HEK293 (cell line): ENCODE measurements at regions of chr7 and their contacts with region 1.

Region 1: GRCh38 chr7:28926871-28927597 is 31.1 kb downstream of the TRIL start:
- H3K4me3 ChIP-seq: peak overlapping the region; percentile 48
- H3K27ac ChIP-seq: peak overlapping the region; percentile 6; the same call in 1 of the 2 replicates
- H3K4me1 ChIP-seq: peaks cover under 1% of the 10 kb centered on the region; the same call in 1 of the 2 replicates
- CTCF ChIP-seq: no peak; the same call in 1 of the 2 replicates

Region 2: DNA sequence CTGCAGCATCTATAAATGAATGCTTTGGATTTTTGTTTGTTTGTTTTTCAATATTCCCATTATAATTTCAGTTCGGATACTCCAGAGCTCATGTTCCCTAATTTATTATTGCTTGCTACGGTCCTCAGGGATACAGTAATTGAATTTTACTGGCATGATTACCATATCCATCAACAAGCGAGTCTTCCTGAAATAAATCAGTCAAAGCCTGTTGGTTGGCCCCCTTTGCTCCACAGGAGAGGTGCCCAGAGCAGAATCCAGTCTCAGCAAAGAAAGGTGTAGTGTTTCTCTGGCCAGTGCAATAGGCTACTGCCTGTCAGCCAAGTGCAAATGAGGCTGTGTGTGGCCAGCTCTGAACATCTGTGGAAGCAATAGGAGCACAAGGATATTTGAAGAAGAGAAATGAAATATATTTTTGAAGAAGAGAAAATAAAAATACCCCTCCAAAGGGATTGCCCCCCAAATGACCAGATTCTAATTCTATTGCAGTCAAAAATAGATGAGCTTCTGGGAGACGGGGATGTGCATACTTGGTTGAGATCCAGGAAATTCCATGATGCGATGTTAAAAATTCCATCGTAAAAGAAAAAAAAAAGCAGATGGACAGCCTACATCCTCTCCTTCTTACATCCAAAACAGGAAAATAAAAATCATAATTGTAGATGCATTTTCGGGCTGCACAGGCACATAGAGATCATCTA is 13.0 kb after region 1 on chr7:
- CTCF ChIA-PET with region 1: interaction called, 61 read pairs
- POLR2A ChIA-PET with region 1: interaction called, 5 read pairs
- H3K4me3 ChIP-seq: no peak overlapping the region
- H3K27ac ChIP-seq: no peak overlapping the region; the same call in 1 of the 2 replicates
- H3K4me1 ChIP-seq: peaks cover 12% of the 10 kb centered on the region; the same call in 1 of the 2 replicates
- CTCF ChIP-seq: no peak

Region 3: DNA sequence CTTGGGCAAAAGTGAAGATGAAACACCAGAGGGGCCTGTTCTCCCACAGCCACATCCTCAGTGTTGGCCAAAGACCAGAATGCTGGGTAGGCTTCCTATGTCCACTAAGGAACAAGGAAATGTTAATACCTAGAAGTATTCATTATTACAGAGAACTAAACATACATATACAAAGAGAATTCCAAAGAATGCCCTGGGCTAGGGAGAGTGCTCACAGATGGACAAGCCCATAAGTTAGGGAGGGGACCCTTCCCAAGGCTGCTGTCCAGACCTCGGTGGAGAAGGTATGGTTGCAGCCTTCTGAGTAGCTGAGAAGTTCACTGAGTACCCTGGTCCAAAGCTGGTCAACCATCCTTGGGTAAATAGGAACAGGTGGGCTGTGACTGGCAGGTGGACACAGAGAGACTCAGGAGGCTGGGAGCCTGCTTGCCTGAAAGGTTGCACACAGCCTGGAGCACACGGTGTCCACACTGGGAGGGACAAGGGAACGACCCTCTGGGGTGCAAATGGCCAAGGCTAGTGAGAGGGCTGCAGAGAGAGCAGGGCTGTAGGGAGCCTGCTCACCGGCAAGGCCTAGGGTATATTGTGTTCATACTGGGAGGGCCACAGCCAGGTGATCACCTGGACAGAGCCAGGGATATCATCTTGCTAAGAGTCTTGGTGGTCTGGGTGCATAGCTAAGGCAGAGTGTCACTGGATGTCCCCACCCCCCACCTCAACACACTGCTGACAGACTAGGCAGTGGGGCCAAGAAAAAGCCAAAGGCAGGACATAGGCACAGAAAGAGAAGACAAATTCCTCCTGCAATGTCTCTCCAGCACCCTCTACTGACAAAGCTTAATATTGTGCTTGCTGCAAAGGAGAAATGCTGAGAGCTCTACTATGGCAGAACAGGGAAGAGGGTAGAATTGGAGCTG is 179.0 kb after region 1 on chr7:
- CTCF ChIA-PET with region 1: interaction called, 210 read pairs
- POLR2A ChIA-PET with region 1: interaction called, 4 read pairs
- H3K4me3 ChIP-seq: no peak overlapping the region
- H3K27ac ChIP-seq: no peak overlapping the region
- H3K4me1 ChIP-seq: no peaks in the 10 kb centered on the region
- CTCF ChIP-seq: peak; percentile 64

Region 4: DNA sequence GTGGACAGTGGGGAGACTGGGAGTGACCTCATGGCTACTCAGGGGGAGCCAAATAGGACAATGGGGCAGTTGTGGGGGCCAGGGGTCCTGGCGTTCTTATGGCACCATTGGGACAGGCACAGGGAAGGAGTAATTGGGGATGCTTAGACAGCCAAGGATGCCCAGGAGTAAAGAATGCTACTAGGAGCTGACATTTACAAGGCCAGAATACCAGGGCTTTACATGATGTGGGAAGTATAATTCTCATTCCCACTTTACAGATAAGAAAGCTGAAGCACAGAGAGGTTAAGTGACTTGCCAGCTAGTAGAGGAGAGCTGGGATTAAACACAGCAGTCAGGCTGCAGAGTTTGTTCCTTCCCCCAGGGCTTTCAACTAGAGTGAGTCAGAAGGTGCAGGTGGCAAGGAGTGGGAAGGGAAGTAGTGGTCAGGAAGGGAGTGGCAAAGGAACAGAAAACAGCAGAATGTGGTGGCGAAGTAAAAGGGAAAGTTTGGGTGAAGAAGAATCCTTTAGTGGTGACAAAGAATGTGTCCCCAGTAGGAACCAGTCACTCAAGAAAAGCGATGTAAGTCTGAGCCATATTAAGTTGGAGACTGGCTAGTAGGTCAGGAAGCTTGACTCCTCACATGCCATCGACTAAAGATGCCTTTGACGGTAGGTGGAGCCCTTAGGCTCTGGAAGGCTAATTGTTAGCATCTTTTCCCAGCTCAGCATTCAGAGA is 186.5 kb after region 1 on chr7:
- CTCF ChIA-PET with region 1: interaction called, 210 read pairs
- POLR2A ChIA-PET with region 1: no interaction called
- H3K4me3 ChIP-seq: no peak overlapping the region
- H3K27ac ChIP-seq: no peak overlapping the region
- H3K4me1 ChIP-seq: peaks cover 4% of the 10 kb centered on the region
- CTCF ChIP-seq: peak; percentile 43; the same call in 1 of the 2 replicates

Region 5: GRCh38 chr7:29194594-29195427 is 267.8 kb after region 1 on chr7 and contains the start of gene CHN2:
- CTCF ChIA-PET with region 1: interaction called, 10 read pairs
- POLR2A ChIA-PET with region 1: no interaction called
- H3K4me3 ChIP-seq: peak within 1 kb of the TSS; percentile 83
- H3K27ac ChIP-seq: peak within 1 kb of the TSS; percentile 76; the same call in 1 of the 2 replicates
- H3K4me1 ChIP-seq: peaks cover 14% of the 10 kb centered on the region
- CTCF ChIP-seq: peak; percentile 36; the same call in 1 of the 2 replicates

Region 6: GRCh38 chr7:29408841-29409243 is 481.8 kb after region 1 on chr7:
- CTCF ChIA-PET with region 1: interaction called, 99 read pairs
- POLR2A ChIA-PET with region 1: no interaction called
- H3K4me3 ChIP-seq: no peak overlapping the region
- H3K27ac ChIP-seq: no peak overlapping the region
- H3K4me1 ChIP-seq: no peaks in the 10 kb centered on the region
- CTCF ChIP-seq: peak; percentile 29; the same call in 1 of the 2 replicates